ENCODE measurements at regions of chr17 and their contacts with region 1.

Region 1: DNA sequence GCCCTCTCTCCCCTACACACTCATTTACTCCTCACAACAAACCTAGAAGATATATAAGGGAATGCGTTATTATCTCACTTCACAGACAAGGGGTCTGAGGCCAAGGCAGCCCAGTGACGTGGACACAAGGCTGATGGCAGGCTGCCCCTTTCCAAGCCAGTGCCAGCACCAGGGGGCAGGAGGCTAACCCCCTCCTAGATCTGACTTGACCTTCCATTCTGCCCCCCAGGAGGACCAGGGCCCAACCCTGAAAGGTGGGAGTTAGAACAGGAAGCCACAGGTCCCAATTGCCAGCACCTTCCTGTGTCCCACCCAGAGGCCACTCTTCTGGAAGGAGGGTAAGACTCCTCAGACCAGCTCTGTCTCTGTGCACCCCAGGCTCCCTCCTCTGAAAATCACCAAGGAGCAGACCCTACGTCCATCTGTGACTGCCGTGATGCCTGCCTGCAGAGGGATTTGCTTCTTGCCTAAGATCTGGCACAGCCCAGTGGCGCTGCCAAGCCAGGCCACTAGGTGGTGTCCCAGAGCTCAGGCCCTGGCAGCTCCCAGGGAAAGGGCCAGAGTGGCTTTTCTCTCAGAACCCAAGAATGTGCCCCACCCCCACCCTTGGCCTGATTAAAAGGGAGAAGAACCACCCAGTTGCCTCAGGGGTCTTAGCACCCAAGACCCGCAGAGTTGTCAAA is 42.4 kb upstream of the MRPS23 start:
- DNase-seq: peak; percentile 88
- CTCF ChIP-seq: peak; percentile 99

Region 2: DNA sequence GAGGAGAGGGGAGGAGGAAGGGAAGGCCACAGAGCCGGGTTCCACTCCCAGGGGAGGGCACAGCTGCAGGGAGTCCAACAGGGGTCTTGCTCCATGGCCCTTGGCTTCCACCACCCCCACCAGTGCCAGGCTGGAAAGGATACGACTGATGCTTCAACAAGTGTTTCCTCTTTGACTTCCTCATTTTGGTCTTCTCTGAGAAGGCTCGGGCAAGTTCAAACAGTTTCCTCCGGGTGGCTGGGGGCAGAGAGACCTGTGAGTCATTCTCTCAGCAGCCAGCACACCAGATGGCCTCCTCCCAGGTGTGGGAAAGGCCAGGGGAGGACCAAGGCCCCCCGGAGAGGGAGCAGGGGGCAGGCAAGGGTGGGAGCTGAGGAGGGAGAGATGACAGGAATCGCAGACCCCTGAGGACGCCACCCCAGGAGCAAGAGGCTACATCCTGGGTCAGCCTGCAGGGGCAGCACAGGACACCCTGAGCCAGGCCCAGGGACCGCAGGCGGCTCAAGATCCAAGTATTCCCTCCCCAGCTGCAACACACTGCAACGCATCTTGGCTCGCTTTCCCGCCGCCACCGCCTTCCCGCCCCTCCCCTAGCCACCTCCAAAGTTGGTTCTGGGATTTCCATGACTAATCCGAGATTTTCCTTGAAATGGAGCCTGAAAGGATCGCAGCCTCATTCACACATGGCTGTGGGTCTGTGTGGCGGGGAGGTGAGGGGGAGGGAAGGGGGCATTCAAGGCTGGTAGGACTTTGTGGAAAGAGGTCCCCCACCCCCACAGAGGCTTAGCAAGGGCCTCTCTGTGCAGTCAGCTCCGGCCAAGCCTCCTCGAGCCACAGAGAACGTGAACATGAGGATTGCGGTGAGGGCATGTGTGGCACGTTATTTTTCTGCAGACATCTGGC is 24.0 kb before region 1 on chr17:
- CTCF ChIA-PET with region 1: interaction called, 31 read pairs
- POLR2A ChIA-PET with region 1: no interaction called
- DNase-seq: peak; percentile 89
- CTCF ChIP-seq: no peak

Region 3: GRCh38 chr17:57879463-57880433 is 12.5 kb before region 1 on chr17:
- CTCF ChIA-PET with region 1: interaction called, 21 read pairs
- POLR2A ChIA-PET with region 1: interaction called, 3 read pairs
- DNase-seq: no peak
- CTCF ChIP-seq: no peak

Region 4: DNA sequence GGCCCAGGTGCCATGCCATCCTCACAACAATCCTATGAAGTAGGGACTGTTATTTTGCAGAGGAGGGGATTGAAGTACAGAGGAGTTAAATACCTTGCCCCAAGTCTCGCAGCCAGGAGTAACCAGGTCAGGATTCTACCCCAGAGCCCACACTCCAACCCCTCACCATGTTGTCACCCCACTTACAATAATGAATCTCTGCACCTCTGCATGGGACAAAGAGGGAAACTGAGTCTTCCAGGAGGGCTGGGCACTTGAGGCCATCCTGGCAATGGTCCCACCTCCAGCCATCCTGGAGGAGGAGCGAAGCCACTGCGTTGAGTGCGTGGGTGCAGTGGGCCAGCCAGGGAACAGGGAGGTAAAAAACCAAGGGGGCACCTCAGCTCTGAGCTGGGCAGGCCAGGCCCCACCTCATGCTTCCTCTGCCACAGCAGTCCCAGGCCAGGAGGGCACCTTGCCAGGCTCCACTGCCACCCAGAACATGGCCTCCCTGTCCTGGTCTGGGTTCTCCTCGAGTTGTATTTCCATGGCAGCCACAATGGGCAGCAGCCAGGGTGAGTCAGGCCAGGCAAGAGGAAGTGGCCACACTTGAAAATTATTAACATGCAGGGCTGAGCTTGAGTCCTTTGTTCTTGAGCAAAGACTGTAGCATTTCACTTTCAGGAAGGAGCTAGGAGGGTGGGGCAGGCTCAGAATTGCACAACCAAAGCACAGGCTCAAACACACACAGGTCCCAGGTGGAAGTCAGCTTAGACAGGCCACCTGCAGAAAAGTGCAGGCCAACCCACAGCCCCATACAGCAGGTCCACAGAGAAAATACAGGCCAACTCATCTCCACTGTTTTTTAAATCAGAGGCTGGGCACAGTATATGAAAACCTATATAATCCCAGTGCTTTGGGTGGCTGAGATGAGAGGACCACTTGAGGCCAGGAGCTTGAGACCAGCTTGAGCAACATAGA is 10.8 kb after region 1 on chr17:
- CTCF ChIA-PET with region 1: interaction called, 57 read pairs
- POLR2A ChIA-PET with region 1: interaction called, 3 read pairs
- DNase-seq: peak; percentile 86
- CTCF ChIP-seq: no peak

Region 5: GRCh38 chr17:57909548-57909947 is 17.3 kb after region 1 on chr17:
- CTCF ChIA-PET with region 1: interaction called, 57 read pairs
- POLR2A ChIA-PET with region 1: no interaction called
- DNase-seq: no peak
- CTCF ChIP-seq: no peak

Region 6: GRCh38 chr17:57946798-57947358 is 54.6 kb after region 1 on chr17:
- CTCF ChIA-PET with region 1: interaction called, 13 read pairs
- POLR2A ChIA-PET with region 1: interaction called, 4 read pairs
- DNase-seq: peak; percentile 76
- CTCF ChIP-seq: no peak

Region 7: DNA sequence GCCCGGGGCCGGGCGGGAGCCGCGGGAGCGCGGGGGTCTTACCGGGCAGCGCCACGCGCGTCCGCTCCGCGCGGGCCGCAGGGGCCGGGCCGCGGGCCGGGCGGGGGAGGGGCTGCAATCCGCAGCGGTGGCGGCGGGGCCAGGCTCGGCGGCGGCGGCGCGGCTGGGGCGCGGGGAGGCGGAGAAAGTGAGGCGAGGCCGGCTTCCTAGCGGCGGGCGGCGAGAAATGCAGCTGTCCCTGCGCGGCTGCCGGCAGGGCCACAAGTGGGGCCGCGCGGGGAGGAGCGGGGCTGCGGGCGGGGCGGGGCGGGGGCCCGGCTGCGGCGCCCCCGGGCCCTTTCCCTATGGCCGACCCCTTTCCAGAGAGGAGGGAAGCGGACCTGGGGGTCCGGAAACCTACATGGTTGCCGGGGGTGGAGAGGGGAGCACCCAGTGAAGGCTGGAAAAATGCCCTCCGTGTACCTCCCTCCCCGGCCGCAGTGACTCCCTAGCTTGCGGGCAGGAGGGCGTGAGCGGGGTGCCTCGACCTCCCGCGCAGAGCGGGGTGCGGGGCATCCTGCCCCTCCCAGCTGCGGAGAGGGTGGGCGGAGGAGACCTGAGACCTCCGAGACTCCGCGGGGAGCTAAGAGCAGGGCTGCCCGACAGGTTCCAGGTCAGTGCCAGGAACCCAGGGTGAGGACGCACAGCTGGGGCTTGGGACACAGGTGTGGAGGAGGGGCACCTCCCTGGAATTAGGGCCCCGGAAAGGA is 63.1 kb after region 1 on chr17 and contains the start of gene CUEDC1:
- CTCF ChIA-PET with region 1: interaction called, 28 read pairs
- POLR2A ChIA-PET with region 1: no interaction called
- DNase-seq: peak; percentile 83
- CTCF ChIP-seq: peak; percentile 34

Region 8: DNA sequence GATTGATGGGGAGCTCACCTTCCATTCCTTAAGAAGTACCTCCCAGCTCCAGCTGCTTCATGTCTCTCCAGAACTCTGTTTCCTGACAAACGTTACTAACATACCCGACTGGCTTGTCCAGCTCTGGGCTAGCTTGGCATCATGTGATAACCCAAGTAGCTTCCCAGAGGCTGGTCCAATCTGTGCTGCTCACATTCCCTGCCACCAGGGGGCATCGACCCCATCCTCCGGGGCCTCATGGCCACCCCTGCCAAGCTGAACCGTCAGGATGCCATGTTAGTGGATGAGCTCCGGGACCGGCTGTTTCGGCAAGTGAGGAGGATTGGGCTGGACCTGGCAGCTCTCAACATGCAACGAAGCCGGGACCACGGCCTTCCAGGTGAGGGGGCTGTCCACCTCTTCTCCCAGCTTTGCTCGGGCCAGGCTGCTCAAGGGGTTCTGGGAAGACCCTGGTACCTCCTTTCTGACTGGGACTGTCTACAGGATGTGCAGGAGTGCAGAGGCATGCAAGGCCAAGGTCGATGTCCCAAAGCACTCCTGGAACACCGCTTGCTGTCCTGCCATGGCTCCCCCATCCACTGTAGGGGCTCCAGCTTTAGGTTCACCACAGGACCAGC is 307.8 kb after region 1 on chr17:
- CTCF ChIA-PET with region 1: no interaction called
- POLR2A ChIA-PET with region 1: no interaction called
- DNase-seq: peak; percentile 72
- CTCF ChIP-seq: peak; percentile 74

Measured in GM10248 (cell line).